Psoas muscle (tissue), 8 donors: ENCODE measurements at regions of chr5 and their contacts with region 1.

Region 1: GRCh38 chr5:149551200-149552037 is at the start of gene CSNK1A1:
- DNase-seq: peak; percentile 99
- ATAC-seq: peak; percentile 92 to 95 (median 94)
- H3K4me3 ChIP-seq: peak within 1 kb of the TSS; percentile 91
- H3K27ac ChIP-seq: peak within 1 kb of the TSS; percentile 99
- H3K4me1 ChIP-seq: peaks cover 33% of the 10 kb centered on the region
- H3K27me3 ChIP-seq: no peaks in the 10 kb centered on the region
- CTCF ChIP-seq: peak; percentile 90
- total RNA-seq, gene CSNK1A1: 139 to 394 (median 224) TPM

Region 2: DNA sequence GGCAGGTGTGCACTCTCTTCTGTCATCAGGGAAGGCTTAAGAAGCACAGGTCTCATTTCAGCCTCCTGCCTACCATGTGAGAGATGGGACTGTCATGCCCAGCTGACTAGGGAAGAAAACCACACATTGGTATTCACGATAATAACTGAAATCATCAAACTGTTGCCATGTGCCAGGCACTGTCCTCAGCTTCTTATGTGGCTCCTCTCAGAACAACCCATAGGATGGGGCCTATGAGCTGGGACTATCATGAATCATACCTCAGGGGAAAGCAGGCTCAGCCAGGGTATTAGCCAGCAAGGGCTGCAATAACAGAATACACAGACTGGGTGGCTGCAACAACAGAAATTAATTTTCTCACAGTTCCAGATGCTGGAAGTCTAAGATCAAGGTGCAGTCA is 276.5 kb before region 1 on chr5:
- intact Hi-C with region 1: no loop called
- DNase-seq: no peak
- ATAC-seq: peak in 1 of 4 donors; percentile 33
- H3K4me3 ChIP-seq: no peak overlapping the region
- H3K27ac ChIP-seq: peak overlapping the region; percentile 19
- H3K4me1 ChIP-seq: peaks cover 46% of the 10 kb centered on the region
- H3K27me3 ChIP-seq: no peaks in the 10 kb centered on the region
- CTCF ChIP-seq: no peak

Region 3: DNA sequence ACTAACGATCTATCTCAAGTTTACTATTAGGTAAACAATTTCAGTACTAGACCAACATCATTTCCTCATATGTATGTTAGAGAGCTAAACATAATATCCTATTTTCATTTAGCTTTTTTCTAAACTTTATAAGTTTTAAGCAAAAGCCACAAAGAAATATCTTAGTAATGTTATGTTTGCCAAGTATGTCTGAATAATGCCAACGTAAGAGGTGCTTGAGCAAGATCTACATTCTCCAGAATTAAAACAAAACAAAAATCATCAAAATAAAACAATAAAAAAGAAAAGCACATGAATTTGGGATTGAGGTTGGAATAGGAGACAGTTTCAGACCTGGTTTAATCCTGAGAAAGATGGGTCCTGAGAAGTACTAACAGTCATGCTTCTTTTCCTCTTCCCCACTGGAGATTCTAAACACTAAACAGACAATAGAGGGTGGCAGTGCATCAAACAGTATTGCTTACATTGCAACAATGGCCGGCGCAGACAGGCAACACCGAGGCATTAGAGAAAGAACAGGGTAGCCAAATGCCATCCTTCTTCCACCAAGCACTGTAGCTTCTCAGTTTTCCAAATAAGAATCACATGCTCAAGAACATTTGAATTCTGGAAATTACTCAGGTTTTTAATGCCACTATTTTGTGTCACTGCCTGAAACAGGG is 33.8 kb before region 1 on chr5:
- intact Hi-C with region 1: loop called in 1 of 2 experiments (anchors 5 kb)
- DNase-seq: no peak
- ATAC-seq: peak; percentile 34 to 68 (median 62)
- H3K4me3 ChIP-seq: peak overlapping the region; percentile 50
- H3K27ac ChIP-seq: peak overlapping the region; percentile 60
- H3K4me1 ChIP-seq: peaks cover 93% of the 10 kb centered on the region
- H3K27me3 ChIP-seq: no peaks in the 10 kb centered on the region
- CTCF ChIP-seq: no peak

Region 4: DNA sequence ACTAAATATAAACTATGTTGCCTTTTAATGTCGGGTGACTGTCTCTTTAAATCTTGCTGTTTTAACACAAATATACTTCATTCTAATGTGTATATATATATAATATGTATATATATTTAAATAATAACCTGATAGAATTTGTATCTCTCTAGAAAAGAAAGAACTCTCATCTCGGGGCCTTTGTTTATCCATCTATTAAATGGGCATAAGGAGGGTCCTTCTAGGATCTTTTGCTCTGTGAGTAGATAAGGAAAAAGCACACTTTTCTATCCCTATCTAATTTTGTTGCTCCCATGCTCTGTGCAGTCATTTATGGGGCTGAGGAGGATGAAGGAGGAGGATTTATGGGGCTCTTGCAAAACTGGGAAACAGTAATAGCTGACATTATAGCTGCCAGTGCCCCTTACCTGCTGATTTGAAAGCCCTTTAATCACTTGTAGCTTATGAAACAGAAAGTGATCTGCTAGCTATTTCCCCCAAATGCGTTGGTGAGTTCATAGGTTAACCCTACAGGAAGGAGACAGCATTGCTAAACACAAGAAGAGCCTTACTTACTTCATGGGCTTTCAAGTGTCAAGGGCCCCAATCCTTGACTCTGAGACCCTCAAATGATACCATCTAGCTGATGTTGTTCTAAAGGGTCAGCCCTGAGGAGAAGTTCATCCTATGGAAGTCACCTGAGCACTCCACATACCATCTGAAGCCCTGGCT is 172.9 kb after region 1 on chr5:
- intact Hi-C with region 1: no loop called
- DNase-seq: no peak
- ATAC-seq: no peak
- H3K4me3 ChIP-seq: no peak overlapping the region
- H3K27ac ChIP-seq: no peak overlapping the region
- H3K4me1 ChIP-seq: no peaks in the 10 kb centered on the region
- H3K27me3 ChIP-seq: no peaks in the 10 kb centered on the region
- CTCF ChIP-seq: no peak